ENCODE measurements at regions of chr1 and their contacts with region 1.

Region 1: GRCh38 chr1:168136709-168137514 is at the start of gene GPR161:
- DNase-seq: peak in 1 of 2 donors; percentile 75
- H3K4me3 ChIP-seq: peak within 1 kb of the TSS; percentile 74 to 89
- H3K27ac ChIP-seq: peak within 1 kb of the TSS; percentile 75 to 79
- H3K4me1 ChIP-seq: peaks cover 2 to 6% of the 10 kb centered on the region in 2 donors
- H3K27me3 ChIP-seq: no peaks in the 10 kb centered on the region
- CTCF ChIP-seq: no peak
- total RNA-seq, gene GPR161: 16.3 TPM

Region 2: DNA sequence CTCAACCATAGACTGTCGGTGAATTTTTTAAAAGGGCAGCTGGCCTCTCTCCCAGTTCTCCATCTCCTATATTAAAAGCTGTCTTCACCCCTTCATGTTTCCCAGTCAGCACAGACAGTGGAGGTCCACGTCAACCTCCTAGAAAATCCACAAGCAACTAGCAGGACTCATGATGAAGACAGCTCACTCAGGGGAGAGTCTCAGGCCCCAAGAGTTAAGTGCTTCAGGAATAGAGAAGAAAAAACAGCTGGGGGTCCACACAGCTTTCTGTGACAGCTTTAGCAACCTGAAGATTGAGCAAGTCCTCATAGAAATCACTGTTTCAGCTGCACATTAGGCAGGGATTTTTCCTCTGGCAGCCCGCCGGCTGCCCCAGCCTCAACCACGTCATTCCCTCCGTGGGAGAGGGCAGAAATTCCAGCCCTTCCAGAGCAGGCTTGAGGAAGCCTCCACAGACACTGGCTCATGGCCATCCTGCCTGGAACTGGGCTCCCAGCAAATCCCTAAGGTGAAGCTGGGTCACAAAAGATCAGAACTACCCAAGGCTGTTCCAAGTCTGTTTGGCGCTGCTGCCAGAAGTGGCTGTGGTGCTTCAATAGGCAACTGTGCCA is 15.4 kb before region 1 on chr1:
- intact Hi-C with region 1: loop called (anchors 2 kb)
- DNase-seq: peak in 1 of 2 donors; percentile 89
- H3K4me3 ChIP-seq: no peak overlapping the region
- H3K27ac ChIP-seq: peak overlapping the region; percentile 77 to 81
- H3K4me1 ChIP-seq: peaks cover 0 to 13% of the 10 kb centered on the region in 2 donors
- H3K27me3 ChIP-seq: no peaks in the 10 kb centered on the region
- CTCF ChIP-seq: no peak

Region 3: DNA sequence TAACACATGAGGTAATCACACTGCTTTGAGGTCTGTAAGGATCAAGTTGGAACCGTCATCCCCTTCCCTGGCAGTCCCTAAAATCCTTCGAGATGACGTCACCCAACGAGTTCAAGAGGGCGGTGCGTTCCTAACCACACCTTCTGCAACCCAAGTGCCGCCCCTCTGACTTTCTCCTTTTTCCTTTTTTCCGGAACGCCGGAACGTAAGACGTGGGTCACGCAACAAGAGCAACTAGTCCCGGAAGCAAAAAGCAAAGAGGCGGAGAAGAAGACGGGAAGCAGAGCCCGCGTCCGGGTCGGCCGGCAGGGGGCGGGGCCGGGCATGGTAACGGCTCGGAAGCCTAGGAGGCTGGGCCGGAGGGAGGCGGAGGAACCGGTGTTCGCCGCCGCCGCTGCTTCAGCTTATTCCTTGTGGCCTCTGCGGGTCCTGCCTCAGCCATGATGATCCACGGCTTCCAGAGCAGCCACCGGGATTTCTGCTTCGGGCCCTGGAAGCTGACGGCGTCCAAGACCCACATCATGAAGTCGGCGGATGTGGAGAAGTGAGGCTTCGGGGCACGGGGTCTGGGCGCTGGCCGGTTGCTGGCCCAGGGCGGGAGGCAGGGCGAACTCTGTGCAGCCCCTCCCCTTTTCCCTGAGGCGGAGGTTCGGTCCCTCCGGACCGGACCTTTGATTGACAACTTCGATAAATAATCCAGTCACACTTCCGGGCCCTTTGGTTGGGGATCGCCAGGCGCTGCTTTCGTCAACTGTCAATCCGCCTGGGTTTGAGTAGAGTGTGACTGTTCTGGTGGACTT is 41.9 kb after region 1 on chr1 and contains the start of gene TIPRL:
- intact Hi-C with region 1: loop called (anchors 2 kb)
- DNase-seq: peak; percentile 89 to 99
- H3K4me3 ChIP-seq: peak within 1 kb of the TSS; percentile 66 to 89
- H3K27ac ChIP-seq: peak within 1 kb of the TSS; percentile 95 to 96
- H3K4me1 ChIP-seq: peaks cover 0 to 22% of the 10 kb centered on the region in 2 donors
- H3K27me3 ChIP-seq: no peaks in the 10 kb centered on the region
- CTCF ChIP-seq: peak; percentile 57 to 78 (median 62)
- total RNA-seq, gene TIPRL: 2.7 TPM

Measured in ascending aorta (tissue), 2 donors.